Ascending aorta (tissue), 2 donors: ENCODE measurements at regions of chr14 and their contacts with region 1.

Region 1: GRCh38 chr14:63276492-63277342 is 42.0 kb downstream of the GPHB5 start:
- DNase-seq: no peak
- H3K4me3 ChIP-seq: no peak overlapping the region
- H3K27ac ChIP-seq: no peak overlapping the region
- H3K4me1 ChIP-seq: no peaks in the 10 kb centered on the region
- H3K27me3 ChIP-seq: no peaks in the 10 kb centered on the region
- CTCF ChIP-seq: peak; percentile 70 to 80 (median 72)

Region 2: GRCh38 chr14:62162998-62163589 is 1113.6 kb before region 1 on chr14:
- intact Hi-C with region 1: loop called (anchors 10 kb)
- DNase-seq: no peak
- H3K4me3 ChIP-seq: no peak overlapping the region
- H3K27ac ChIP-seq: no peak overlapping the region
- H3K4me1 ChIP-seq: no peaks in the 10 kb centered on the region
- H3K27me3 ChIP-seq: no peaks in the 10 kb centered on the region
- CTCF ChIP-seq: peak in 2 of 3 experiments; percentile 28 to 54

Region 3: GRCh38 chr14:63240221-63240620 is 36.5 kb before region 1 on chr14:
- intact Hi-C with region 1: loop called (anchors 5 kb)
- DNase-seq: no peak
- H3K4me3 ChIP-seq: no peak overlapping the region
- H3K27ac ChIP-seq: no peak overlapping the region
- H3K4me1 ChIP-seq: peaks cover 0 to 15% of the 10 kb centered on the region in 2 donors
- H3K27me3 ChIP-seq: no peaks in the 10 kb centered on the region
- CTCF ChIP-seq: no peak

Region 4: GRCh38 chr14:63367742-63368364 is 91.1 kb after region 1 on chr14:
- intact Hi-C with region 1: no loop called
- DNase-seq: no peak
- H3K4me3 ChIP-seq: no peak overlapping the region
- H3K27ac ChIP-seq: no peak overlapping the region
- H3K4me1 ChIP-seq: no peaks in the 10 kb centered on the region
- H3K27me3 ChIP-seq: no peaks in the 10 kb centered on the region
- CTCF ChIP-seq: no peak